ENCODE measurements at regions of chr16 and their contacts with region 1.

Region 1: GRCh38 chr16:64061621-64062020 is 1060.2 kb downstream of the CDH11 start:
- DNase-seq: no peak
- H3K4me3 Mint-ChIP-seq: no peak overlapping the region
- H3K27ac Mint-ChIP-seq: no peak overlapping the region
- H3K4me1 Mint-ChIP-seq: no peaks in the 10 kb centered on the region
- H3K27me3 Mint-ChIP-seq: no peaks in the 10 kb centered on the region

Region 2: GRCh38 chr16:64008131-64008530 is 53.5 kb before region 1 on chr16:
- CTCF ChIA-PET with region 1: no interaction called
- POLR2A ChIA-PET with region 1: interaction called, 14 read pairs
- DNase-seq: no peak
- H3K4me3 Mint-ChIP-seq: no peak overlapping the region
- H3K27ac Mint-ChIP-seq: no peak overlapping the region
- H3K4me1 Mint-ChIP-seq: no peaks in the 10 kb centered on the region
- H3K27me3 Mint-ChIP-seq: no peaks in the 10 kb centered on the region

Region 3: GRCh38 chr16:64077242-64077641 is 15.6 kb after region 1 on chr16:
- CTCF ChIA-PET with region 1: no interaction called
- POLR2A ChIA-PET with region 1: no interaction called
- DNase-seq: no peak
- H3K4me3 Mint-ChIP-seq: no peak overlapping the region
- H3K27ac Mint-ChIP-seq: no peak overlapping the region
- H3K4me1 Mint-ChIP-seq: no peaks in the 10 kb centered on the region
- H3K27me3 Mint-ChIP-seq: no peaks in the 10 kb centered on the region

Region 4: DNA sequence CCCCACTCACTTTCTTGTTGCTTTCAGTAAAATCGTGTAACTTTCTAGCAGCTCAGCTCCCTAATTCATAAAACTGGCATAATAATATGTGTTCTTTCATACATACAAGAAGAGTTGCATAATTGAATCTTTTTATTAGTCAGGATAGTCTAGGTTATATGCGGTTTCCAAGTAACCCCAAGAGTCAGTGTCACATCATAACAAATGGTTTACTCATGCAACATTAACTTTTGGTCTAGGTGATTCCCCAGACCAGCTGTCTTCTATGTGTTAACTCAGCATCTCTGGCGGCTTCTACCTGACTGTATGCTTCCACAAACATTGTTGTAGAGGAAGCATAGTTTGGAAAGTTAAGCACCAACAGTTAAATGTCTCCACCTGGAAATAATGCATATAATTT is 59.9 kb after region 1 on chr16:
- CTCF ChIA-PET with region 1: no interaction called
- POLR2A ChIA-PET with region 1: no interaction called
- DNase-seq: no peak
- H3K4me3 Mint-ChIP-seq: no peak overlapping the region
- H3K27ac Mint-ChIP-seq: no peak overlapping the region
- H3K4me1 Mint-ChIP-seq: no peaks in the 10 kb centered on the region
- H3K27me3 Mint-ChIP-seq: no peaks in the 10 kb centered on the region